Sciatic nerve (tissue), 2 donors: ENCODE measurements at regions of chr4 and their contacts with region 1.

Region 1: GRCh38 chr4:84439996-84440395 is 59.1 kb downstream of the NKX6-1 start:
- DNase-seq: no peak
- ATAC-seq: no peak

Region 2: DNA sequence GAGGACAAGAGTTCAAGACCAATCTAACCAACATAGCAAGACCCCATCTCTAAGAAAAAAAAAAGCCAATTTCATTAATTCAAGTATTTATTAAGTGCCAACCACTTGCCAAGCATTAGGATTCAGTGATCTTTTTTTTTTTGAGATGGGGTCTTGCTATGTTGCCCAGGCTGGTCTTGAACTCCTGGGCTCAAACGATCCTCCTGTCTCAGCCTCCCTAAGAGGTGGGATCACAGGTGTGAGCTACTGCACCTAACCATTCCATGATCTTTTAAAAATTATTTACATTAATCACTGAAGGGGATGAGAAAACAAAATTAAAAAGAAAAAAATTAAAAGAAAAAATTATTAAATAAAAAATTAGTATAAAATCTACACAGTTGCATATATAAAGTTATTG is 1008.8 kb before region 1 on chr4:
- intact Hi-C with region 1: no loop called
- DNase-seq: no peak
- ATAC-seq: no peak

Region 3: DNA sequence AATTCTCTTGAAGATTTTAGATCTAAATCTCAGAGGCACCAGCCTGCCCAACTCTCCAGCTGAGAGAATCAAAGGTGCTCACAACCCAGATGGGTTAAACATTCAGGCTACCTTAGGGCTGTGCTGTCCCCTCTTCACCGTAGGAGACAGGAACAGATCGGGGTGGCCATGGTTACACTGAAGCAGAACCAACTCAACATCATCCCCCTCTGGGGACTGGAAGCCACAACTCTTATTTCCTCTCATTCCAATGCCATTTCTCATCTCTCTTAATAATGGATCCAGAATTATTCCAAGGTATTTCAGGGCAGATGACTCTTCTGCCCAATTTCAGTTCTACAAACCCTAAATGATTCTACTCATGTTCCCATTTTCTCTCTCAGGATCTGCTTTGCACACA is 50.6 kb before region 1 on chr4:
- intact Hi-C with region 1: no loop called
- DNase-seq: no peak
- ATAC-seq: no peak

Region 4: GRCh38 chr4:85842540-85842939 is 1402.5 kb after region 1 on chr4:
- intact Hi-C with region 1: loop called (anchors 5 kb)
- DNase-seq: no peak
- ATAC-seq: peak; percentile 80